ENCODE measurements at regions of chr10 and their contacts with region 1.

Region 1: DNA sequence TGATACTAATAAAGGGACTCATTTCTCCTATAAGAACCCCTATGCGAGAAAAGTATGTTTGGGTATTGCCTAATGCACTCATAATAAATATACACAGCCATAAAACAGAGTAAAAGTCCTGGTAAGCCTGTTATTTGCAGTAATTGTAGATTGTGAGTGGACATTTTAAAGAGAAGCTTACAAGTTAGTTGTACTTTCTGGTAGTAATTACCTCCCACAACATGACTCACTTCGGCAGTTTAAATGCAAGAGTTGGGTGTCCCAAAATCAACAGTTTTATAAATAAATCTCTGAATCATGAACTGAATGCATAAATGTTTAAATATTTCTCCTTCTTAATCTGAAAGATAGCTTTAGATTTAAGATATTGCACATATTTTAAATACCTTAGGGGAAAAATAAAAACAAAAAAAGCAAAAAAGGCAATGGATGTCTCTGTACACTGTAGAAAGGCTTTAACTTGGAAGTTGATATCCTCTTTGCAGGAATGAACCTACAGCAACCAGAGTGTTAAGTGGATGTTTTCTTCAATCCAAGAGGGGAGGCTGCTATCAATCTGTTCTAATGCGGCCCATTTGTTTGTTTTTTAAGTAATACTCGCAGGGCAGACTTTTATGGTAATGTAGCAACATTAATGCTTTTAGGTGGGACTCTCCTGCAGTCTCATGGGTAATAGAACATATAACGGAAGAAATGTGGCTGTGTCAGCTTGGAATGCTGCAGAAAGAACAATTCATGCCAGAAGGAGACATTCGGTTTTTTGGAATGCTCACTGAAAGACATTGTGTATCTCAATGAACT is 57.3 kb upstream of the ZEB1 start:
- DNase-seq: peak; percentile 83
- H3K4me3 ChIP-seq: no peak overlapping the region
- H3K27me3 ChIP-seq: no peaks in the 10 kb centered on the region
- CTCF ChIP-seq: no peak

Region 2: DNA sequence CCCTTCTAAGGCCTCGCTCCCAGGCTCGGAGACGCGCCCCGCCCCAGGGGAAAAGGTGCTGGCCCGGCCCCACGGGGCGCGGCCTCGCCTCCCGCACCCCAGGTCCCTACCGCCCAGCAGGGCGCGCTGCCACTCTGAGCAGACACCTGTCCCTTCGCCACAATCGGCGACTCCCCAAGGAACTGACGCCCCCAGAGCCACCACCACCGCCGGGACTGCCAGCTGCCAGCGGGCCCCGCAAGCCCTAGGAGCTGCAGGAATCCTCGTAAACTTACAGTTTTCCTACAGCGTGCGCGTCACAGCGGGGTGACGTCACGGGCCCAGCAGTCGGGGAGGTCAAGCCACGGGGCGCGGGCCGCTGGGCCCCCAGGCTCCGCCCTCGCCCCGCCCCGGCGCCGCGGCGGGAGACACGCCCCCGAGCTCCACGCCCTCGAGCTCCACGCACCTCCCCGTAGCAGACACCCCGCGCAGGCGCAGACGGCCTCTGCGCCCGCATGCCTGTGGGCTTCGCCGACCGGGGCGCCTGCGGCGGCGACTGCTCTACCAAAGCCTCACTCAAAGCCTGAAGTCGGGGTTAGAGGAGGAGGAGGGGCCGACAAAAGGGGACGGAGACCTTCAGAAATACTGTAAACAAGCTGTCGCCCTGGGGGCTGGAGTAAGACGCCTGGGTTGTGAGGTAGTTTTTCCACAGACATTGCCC is 230.0 kb before region 1 on chr10 and contains the start of gene ZNF438:
- CTCF ChIA-PET with region 1: no interaction called
- POLR2A ChIA-PET with region 1: interaction called, 10 read pairs
- DNase-seq: peak; percentile 83
- H3K4me3 ChIP-seq: peak within 1 kb of the TSS; percentile 52
- H3K27me3 ChIP-seq: no peaks in the 10 kb centered on the region
- CTCF ChIP-seq: peak; percentile 53
- polyA plus RNA-seq, gene ZNF438: 3.7 and 4.1 TPM in 2 replicates

Region 3: GRCh38 chr10:31242902-31243301 is 18.8 kb before region 1 on chr10:
- CTCF ChIA-PET with region 1: no interaction called
- POLR2A ChIA-PET with region 1: interaction called, 10 read pairs
- DNase-seq: peak; percentile 84
- H3K4me3 ChIP-seq: no peak overlapping the region
- H3K27me3 ChIP-seq: no peaks in the 10 kb centered on the region
- CTCF ChIP-seq: no peak

Measured in BJ (cell line).